Vagina (tissue), 2 donors: ENCODE measurements at regions of chr6 and their contacts with region 1.

Region 1: DNA sequence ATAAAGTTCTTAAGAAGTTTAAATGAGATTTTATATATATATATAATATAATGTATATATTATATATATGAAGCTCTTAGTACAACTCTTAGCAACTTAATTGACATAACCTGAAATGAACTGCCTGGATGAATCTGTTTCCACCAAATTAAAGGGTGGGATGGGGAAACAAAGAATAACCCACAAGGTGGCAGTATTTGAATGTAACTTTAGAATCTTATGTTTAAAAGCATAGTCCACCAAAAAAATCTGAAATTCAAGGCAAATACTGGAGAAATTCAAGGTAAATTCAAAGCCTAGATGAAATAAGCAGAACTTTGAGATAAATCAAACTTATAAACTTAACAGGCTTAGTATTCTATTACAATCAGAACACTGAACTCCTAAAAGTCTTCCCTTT is 4.4 kb upstream of the IBTK start:
- DNase-seq: no peak
- H3K4me3 ChIP-seq: no peak overlapping the region
- H3K27ac ChIP-seq: no peak overlapping the region
- H3K4me1 ChIP-seq: peaks cover 11% of the 10 kb centered on the region
- H3K27me3 ChIP-seq: no peaks in the 10 kb centered on the region
- CTCF ChIP-seq: peak in 2 of 3 experiments; percentile 31 to 32
- POLR2A ChIP-seq: no peak

Region 2: DNA sequence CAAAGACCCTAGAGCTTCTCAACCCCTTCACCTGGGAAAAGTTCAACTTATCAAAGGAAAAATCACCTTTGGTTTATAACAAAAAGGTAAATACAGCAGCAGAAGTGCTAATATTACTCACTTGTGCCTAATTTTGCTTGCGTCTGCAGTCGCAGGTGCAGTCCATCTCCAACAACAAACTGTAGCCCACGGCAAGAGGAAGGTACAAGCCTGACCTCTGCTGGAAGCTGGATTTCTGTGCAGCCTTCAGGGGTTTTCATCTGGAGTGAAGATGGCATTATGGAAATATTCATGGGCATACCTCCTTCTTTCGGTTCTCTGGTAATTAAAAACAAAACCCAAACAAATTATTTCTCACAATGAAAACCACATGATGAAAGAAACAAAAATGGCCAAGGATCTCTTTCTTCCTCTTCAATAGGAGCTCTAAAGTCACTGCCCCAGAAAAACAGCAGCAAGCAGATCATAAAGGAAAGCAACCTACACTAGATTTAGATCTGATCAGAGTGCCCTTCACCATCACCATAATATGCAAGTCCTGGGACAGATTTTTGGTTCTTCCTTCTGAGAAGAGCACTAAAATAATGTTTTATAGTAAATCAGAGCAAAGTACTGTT is 805.9 kb after region 1 on chr6:
- intact Hi-C with region 1: loop called (anchors 10 kb)
- DNase-seq: no peak
- H3K4me3 ChIP-seq: no peak overlapping the region
- H3K27ac ChIP-seq: no peak overlapping the region
- H3K4me1 ChIP-seq: no peaks in the 10 kb centered on the region
- H3K27me3 ChIP-seq: no peaks in the 10 kb centered on the region
- CTCF ChIP-seq: peak in 1 of 3 experiments; percentile 33
- POLR2A ChIP-seq: no peak